WTC11 (cell line): ENCODE measurements at regions of chr4 and their contacts with region 1.

Region 1: GRCh38 chr4:89640620-89641366 is 196.2 kb downstream of the SNCA start:
- DNase-seq: peak; percentile 87
- ATAC-seq: peak; percentile 99
- H3K4me3 Mint-ChIP-seq: peak overlapping the region; percentile 55
- H3K27ac Mint-ChIP-seq: no peak overlapping the region; the same call in 1 of the 2 replicates
- H3K4me1 Mint-ChIP-seq: peaks cover 7% of the 10 kb centered on the region
- H3K27me3 Mint-ChIP-seq: peaks cover 3% of the 10 kb centered on the region; the same call in 1 of the 2 replicates
- CTCF ChIP-seq: peak; percentile 76

Region 2: DNA sequence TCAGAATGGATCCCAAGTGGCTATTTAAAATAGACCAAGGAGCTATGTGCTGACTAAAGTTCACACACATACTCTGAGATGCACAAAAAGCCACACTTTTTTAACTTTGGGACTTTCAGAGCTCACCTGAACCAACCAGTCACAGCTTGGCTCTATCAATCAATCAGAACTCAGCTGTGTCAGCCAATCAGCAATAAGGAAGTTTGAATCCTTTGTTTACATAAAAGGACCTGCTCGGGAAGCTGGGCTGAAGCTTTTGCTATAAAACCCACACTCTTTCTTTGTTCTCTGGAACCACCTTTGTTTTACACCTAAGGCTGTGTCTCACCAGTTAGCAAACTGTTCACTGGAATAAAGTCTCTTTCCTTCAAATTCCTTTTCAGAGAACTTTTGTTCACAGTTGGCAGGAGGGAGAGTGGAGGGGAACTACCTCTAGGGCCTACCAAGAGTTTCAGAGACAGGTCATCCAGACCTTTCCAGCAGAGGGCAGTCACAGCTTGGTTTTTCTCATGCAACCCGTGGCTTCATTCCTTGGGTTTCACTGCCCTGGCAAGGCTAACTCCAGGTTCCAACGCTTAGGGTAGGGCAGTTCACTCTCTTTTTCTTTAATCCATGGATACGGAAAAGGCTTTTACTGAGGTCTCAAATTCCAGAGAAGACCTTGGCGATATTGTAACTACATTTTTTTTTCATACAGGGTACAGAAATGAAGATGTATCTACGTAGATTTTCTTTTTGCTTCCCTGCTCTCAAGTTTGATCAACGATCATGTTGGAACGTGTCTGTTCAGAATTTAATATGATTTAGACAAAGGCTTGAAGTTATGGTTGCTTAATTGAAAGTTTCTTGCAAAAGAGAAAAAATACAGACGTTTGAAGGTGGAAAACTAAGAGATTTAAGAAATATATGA is 413.9 kb before region 1 on chr4:
- CTCF ChIA-PET with region 1: interaction called, 13 read pairs
- POLR2A ChIA-PET with region 1: no interaction called
- DNase-seq: peak; percentile 82
- ATAC-seq: peak; percentile 100
- H3K4me3 Mint-ChIP-seq: no peak overlapping the region
- H3K27ac Mint-ChIP-seq: no peak overlapping the region
- H3K4me1 Mint-ChIP-seq: peaks cover 8% of the 10 kb centered on the region
- H3K27me3 Mint-ChIP-seq: no peaks in the 10 kb centered on the region
- CTCF ChIP-seq: peak; percentile 64

Region 3: DNA sequence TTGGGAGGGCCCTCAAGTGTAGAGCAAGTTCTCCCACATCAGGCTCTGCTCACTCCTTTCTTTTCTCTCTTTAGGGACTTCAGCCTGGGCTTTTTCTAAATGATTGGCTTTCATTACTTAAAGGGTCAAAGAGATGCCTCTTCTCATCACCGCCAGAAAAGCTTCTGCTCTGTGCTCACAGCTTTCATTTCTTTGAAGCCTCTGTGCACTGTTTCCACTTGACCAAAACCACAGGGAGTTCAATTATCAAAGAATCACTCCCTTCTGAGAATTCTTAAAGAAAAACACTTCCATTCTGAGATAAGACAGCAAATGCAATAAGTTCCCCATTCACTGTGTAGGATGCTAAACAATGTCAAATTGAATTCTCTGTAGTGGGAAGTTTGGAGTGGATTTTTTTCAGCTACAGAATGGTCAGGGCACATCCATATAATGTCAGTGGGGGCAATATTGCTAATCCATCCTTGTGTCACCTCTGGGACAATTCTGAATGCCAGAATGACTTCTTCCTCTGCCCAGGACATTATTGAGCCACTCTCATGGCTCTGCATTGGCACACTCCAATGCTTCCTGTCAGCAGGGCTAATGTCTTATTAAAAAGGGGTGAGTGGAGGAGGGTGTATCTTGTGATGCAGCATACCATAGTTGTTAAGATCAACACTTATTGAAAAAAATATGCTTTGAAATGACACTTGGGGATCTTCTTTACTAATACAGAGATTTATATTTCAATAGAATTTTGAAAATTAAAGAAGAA is 21.4 kb before region 1 on chr4:
- CTCF ChIA-PET with region 1: interaction called, 10 read pairs
- POLR2A ChIA-PET with region 1: no interaction called
- DNase-seq: no peak
- ATAC-seq: no peak
- H3K4me3 Mint-ChIP-seq: no peak overlapping the region
- H3K27ac Mint-ChIP-seq: no peak overlapping the region
- H3K4me1 Mint-ChIP-seq: peaks cover 12% of the 10 kb centered on the region
- H3K27me3 Mint-ChIP-seq: no peaks in the 10 kb centered on the region
- CTCF ChIP-seq: no peak

Region 4: GRCh38 chr4:89653012-89653411 is 12.2 kb after region 1 on chr4:
- CTCF ChIA-PET with region 1: interaction called, 17 read pairs
- POLR2A ChIA-PET with region 1: no interaction called
- DNase-seq: no peak
- ATAC-seq: no peak
- H3K4me3 Mint-ChIP-seq: no peak overlapping the region
- H3K27ac Mint-ChIP-seq: no peak overlapping the region
- H3K4me1 Mint-ChIP-seq: no peaks in the 10 kb centered on the region
- H3K27me3 Mint-ChIP-seq: no peaks in the 10 kb centered on the region
- CTCF ChIP-seq: no peak

Region 5: GRCh38 chr4:89837385-89837992 is 196.7 kb after region 1 on chr4:
- CTCF ChIA-PET with region 1: interaction called, 10 read pairs
- POLR2A ChIA-PET with region 1: no interaction called
- DNase-seq: peak; percentile 66
- ATAC-seq: peak; percentile 78
- H3K4me3 Mint-ChIP-seq: peak overlapping the region; percentile 80
- H3K27ac Mint-ChIP-seq: peak overlapping the region; percentile 95
- H3K4me1 Mint-ChIP-seq: peaks cover 16% of the 10 kb centered on the region
- H3K27me3 Mint-ChIP-seq: peaks cover 21% of the 10 kb centered on the region
- CTCF ChIP-seq: 0 out of 2 replicates have a peak, but pooled peaks have one; percentile 16